Endothelial cell of umbilical vein (primary cell): ENCODE measurements at regions of chr6 and their contacts with region 1.

Region 1: GRCh38 chr6:132530293-132530974 is 7.6 kb upstream of the TAAR9 start:
- DNase-seq: peak; percentile 58
- H3K4me3 ChIP-seq: no peak overlapping the region
- H3K27ac ChIP-seq: no peak overlapping the region
- H3K4me1 ChIP-seq: no peaks in the 10 kb centered on the region
- H3K27me3 ChIP-seq: peaks cover 6 to 12% of the 10 kb centered on the region in 2 experiments
- CTCF ChIP-seq: peak; percentile 60 to 63
- POLR2A ChIP-seq: no peak

Region 2: GRCh38 chr6:132548746-132549463 is 18.5 kb after region 1 on chr6:
- CTCF ChIA-PET with region 1: interaction called, 44 read pairs
- POLR2A ChIA-PET with region 1: no interaction called
- dilution Hi-C with region 1: no loop called
- intact Hi-C with region 1: no loop called
- DNase-seq: no peak
- H3K4me3 ChIP-seq: no peak overlapping the region
- H3K27ac ChIP-seq: no peak overlapping the region
- H3K4me1 ChIP-seq: no peaks in the 10 kb centered on the region
- H3K27me3 ChIP-seq: peaks cover 6 to 8% of the 10 kb centered on the region in 2 experiments
- CTCF ChIP-seq: no peak
- POLR2A ChIP-seq: no peak

Region 3: GRCh38 chr6:132715204-132715603 is 184.8 kb after region 1 on chr6:
- CTCF ChIA-PET with region 1: interaction called, 21 read pairs
- POLR2A ChIA-PET with region 1: no interaction called
- dilution Hi-C with region 1: no loop called
- intact Hi-C with region 1: no loop called
- DNase-seq: peak; percentile 32
- H3K4me3 ChIP-seq: no peak overlapping the region
- H3K27ac ChIP-seq: no peak overlapping the region
- H3K4me1 ChIP-seq: no peaks in the 10 kb centered on the region
- H3K27me3 ChIP-seq: no peaks in the 10 kb centered on the region
- CTCF ChIP-seq: peak in 1 of 2 donors; percentile 18
- POLR2A ChIP-seq: no peak

Region 4: DNA sequence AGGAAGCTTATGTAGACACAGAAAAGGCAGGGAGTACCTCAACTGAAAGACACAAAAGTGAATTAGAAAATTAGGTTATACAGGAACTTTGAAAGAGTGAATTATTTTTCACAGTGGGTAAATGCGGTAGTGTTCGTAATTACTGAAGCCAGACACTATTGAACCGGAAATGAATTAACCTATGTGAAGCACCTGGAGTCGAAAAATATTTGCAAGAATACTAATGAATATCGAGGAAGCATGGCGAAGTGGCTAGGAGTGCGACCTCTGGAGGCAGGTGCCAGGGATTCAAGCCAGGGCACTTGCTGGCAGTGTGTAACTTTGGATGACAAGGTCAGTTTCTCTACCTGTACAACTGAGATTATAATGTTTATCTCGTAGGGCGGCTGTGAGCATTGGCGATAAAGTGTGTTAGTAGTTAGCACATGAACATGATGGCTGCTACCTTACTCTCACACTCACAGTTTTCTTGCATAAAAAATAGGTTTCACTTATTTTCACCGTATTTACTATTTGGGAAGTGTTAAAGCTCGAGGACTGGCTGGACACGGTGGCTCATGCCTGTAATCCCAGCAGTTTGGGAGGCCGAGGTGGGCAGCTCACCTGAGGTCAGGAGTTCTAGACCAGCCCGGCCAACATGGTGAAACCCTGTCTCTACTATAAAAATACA is 268.6 kb after region 1 on chr6:
- CTCF ChIA-PET with region 1: interaction called, 19 read pairs
- POLR2A ChIA-PET with region 1: no interaction called
- dilution Hi-C with region 1: no loop called
- intact Hi-C with region 1: loop called (anchors 1 kb)
- DNase-seq: peak; percentile 86
- H3K4me3 ChIP-seq: peak overlapping the region; percentile 95 to 97 (median 96)
- H3K27ac ChIP-seq: peak overlapping the region; percentile 26
- H3K4me1 ChIP-seq: peaks cover 3% of the 10 kb centered on the region
- H3K27me3 ChIP-seq: peaks cover 0 to 3% of the 10 kb centered on the region in 2 experiments
- CTCF ChIP-seq: peak; percentile 78 to 84
- POLR2A ChIP-seq: no peak

Region 5: DNA sequence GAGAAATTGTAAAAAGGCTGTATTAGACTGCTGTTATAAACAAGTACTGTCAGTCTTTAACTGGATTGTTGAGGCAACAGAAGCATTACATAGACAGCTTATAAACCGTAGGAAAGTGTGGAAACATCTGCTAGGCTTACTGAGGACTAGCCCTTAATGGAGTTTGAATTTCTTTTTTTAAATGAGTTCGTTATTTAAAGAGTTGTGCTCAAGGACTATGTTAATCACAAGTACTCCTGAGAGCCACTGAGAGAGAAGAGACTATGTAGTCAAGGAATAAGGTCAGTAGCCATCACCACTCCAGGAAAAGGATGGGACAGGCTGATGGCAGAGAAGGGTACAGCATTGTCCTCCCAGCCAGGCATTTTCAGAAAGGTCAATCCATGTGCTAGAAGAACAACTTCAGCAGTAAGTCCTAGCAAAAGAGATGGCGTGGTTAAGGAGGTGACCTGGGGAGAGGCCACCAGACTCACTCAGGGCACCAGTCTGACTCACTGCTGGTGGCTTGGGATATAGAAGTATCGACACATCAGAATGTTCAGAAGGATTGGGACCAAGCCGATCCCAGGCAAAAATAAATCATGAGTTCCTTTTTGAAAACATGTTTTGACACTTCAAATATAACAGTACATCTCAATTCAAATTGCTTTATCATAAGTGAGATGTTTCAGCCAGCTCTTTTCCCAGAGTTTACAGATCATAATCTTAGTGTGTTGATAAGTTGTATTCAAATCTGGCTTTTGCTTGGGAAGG is 290.4 kb after region 1 on chr6:
- CTCF ChIA-PET with region 1: interaction called, 13 read pairs
- POLR2A ChIA-PET with region 1: interaction called, 3 read pairs
- dilution Hi-C with region 1: no loop called
- intact Hi-C with region 1: no loop called
- DNase-seq: peak; percentile 29
- H3K4me3 ChIP-seq: no peak overlapping the region
- H3K27ac ChIP-seq: no peak overlapping the region
- H3K4me1 ChIP-seq: peaks cover 9% of the 10 kb centered on the region
- H3K27me3 ChIP-seq: no peaks in the 10 kb centered on the region
- CTCF ChIP-seq: no peak
- POLR2A ChIP-seq: peak; percentile 63

Region 6: GRCh38 chr6:133512410-133513016 is 982.1 kb after region 1 on chr6:
- CTCF ChIA-PET with region 1: no interaction called
- POLR2A ChIA-PET with region 1: no interaction called
- dilution Hi-C with region 1: no loop called
- intact Hi-C with region 1: loop called (anchors 5 kb)
- DNase-seq: peak; percentile 60
- H3K4me3 ChIP-seq: no peak overlapping the region
- H3K27ac ChIP-seq: no peak overlapping the region
- H3K4me1 ChIP-seq: no peaks in the 10 kb centered on the region
- H3K27me3 ChIP-seq: no peaks in the 10 kb centered on the region
- CTCF ChIP-seq: peak; percentile 21 to 49
- POLR2A ChIP-seq: no peak